ENCODE measurements at regions of chr2 and their contacts with region 1.

Region 1: GRCh38 chr2:47782671-47783485 is at the start of gene MSH6:
- DNase-seq: peak; percentile 94
- ATAC-seq: peak; percentile 76
- H3K4me3 ChIP-seq: peak within 1 kb of the TSS; percentile 79
- H3K27ac ChIP-seq: peak within 1 kb of the TSS; percentile 61
- H3K4me1 ChIP-seq: peaks cover 28% of the 10 kb centered on the region
- H3K27me3 ChIP-seq: no peaks in the 10 kb centered on the region
- CTCF ChIP-seq: no peak
- total RNA-seq, gene MSH6: 45.5 and 84.9 TPM in 2 replicates

Region 2: DNA sequence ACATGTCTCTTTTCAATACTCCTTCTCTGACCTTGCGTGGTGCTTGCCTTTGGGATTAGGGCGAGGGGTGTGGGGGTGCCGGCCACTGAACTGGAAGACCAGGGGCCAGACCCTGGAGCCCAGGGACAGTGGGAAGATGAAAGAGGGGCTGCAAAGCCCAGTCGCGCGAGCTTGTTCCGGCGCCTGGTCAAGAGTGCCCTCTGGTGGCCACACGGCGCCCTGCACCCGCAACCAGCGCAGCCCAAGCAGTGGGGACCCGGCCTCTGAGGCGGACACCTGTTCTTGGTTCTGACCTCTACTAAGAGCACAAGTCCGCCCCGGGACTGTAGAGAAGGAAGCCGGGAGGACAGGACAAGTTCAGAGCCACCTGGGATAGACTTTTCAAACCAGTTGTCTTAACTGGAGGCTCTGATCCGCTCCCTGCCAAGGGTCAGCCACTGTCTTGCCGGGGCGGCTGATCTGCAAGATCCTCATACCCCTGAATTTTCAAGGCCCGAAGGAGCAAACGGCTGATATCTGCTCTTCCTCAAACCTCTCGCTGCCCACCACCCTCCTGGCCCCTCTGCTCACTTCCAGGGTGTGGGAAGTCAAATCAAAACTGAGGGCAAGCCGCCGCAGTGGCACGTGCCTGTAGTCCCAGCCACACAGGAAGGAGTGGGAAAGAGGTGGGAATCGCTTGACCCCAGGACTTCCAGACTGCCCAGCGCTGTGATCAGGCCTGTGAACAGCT is 14.8 kb before region 1 on chr2:
- CTCF ChIA-PET with region 1: interaction called, 12 read pairs
- POLR2A ChIA-PET with region 1: interaction called, 3 read pairs
- intact Hi-C with region 1: no loop called
- DNase-seq: peak; percentile 66
- ATAC-seq: peak; percentile 77
- H3K4me3 ChIP-seq: peak overlapping the region; percentile 26; the same call in 1 of the 2 replicates
- H3K27ac ChIP-seq: no peak overlapping the region
- H3K4me1 ChIP-seq: no peaks in the 10 kb centered on the region
- H3K27me3 ChIP-seq: no peaks in the 10 kb centered on the region
- CTCF ChIP-seq: peak; percentile 97

Region 3: GRCh38 chr2:48107326-48107925 is 324.5 kb after region 1 on chr2:
- CTCF ChIA-PET with region 1: no interaction called
- POLR2A ChIA-PET with region 1: no interaction called
- intact Hi-C with region 1: loop called (anchors 2 kb)
- DNase-seq: peak; percentile 91
- ATAC-seq: peak; percentile 15
- H3K4me3 ChIP-seq: no peak overlapping the region
- H3K27ac ChIP-seq: peak overlapping the region; percentile 91
- H3K4me1 ChIP-seq: peaks cover 54% of the 10 kb centered on the region
- H3K27me3 ChIP-seq: no peaks in the 10 kb centered on the region
- CTCF ChIP-seq: no peak